Left cardiac atrium (tissue), 4 donors: ENCODE measurements at regions of chr6 and their contacts with region 1.

Region 1: DNA sequence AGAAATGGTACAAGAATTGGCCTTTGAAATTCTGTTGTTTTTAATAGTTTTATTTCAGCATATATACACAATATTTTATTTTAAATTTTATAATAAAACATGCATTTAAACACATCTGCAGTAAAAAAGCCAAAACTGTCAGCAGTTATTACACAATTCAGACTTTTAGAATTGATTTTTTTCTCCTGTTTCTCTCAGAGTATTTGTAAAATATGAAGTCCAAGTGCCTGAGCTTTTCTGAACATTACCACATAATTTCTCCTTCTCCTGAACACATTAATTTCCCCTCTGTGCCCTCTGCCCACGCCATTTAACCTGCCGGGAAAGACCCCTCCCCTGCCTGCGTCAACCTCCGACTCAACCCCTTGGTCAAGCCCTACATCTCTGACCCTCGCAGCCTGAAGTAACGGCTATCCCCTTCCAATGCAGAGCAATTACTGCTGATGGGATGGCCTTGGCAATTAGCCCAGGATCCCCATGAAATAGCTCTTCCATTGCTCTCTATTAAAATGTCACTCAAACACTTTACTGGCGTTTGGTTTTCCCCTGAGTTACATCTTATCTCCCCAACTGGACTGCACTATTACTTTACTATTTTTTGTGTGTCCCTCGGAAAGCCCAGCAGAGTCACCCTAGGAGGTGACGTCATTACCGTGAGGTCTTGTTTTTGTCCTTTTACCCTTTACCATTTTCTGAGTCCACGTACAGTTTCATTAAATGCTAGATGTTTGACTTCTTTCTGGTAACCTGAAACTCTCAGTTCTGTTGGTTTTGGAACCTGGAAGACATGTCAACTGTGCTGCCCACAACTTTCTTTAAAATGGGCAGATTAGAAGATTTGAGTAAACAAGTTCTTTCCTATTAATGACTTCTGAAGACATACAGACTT is 146.7 kb upstream of the TAB2 start:
- DNase-seq: peak; percentile 61
- ATAC-seq: peak; percentile 26 to 63

Region 2: GRCh38 chr6:149065658-149066556 is 104.9 kb before region 1 on chr6:
- intact Hi-C with region 1: no loop called
- DNase-seq: no peak
- ATAC-seq: peak; percentile 58 to 60

Region 3: GRCh38 chr6:149293244-149293643 is 122.4 kb after region 1 on chr6:
- intact Hi-C with region 1: loop called in 1 of 2 experiments (anchors 10 kb)
- DNase-seq: no peak
- ATAC-seq: no peak